Gastrocnemius medialis (tissue), 4 donors: ENCODE measurements at regions of chr2 and their contacts with region 1.

Region 1: DNA sequence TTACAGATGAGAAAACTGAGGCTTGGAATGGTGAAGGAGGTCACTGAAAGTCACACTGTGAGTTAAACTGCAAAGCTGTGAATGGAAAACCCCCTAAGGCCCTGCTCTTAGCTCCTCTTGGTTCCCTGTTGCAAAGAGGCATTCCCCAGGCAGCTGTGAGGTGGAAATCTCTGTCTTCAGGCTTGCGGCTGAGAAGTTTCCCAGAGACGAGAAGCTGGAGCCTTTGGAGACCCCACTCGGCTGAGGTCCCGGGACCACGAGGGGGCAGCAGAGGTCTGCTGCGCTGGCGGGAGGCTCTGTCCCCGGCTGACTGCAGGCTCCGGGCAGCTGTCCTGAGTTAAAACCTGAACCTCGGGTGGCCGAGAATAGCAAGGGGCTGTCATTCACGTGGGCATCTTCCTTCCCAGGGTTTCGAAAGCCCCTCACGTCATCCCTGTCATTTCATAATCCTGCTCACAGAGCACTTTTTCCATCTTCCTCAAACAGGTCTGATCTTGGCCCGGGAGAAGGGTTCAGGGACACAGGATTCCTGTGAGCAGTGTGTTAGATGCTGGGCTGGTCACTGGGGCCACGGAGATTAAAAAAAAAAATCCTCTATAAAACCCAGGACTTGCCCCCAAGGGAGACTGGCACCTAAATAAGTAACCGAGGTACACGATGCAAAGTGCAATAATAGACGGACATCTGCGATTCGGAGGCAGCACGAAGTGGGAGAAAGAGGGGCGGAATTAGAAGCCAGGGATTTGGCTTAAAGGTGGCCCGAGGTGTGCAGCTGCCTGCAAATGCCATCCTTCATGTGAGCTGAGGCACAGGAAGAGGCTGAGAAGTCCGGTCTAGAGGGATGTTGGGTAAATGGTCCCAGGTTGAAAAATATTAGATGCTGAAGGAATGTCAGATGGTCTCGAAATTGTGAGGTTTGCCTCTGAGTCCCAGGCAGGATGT is 24.6 kb upstream of the ATOH8 start:
- DNase-seq: peak; percentile 96 to 98
- ATAC-seq: peak; percentile 63 to 72
- H3K4me3 ChIP-seq: peak overlapping the region in 2 of 4 donors; percentile 6 to 10
- H3K27ac ChIP-seq: peak overlapping the region; percentile 82 to 97 (median 94)
- H3K4me1 ChIP-seq: peaks cover 49 to 54% of the 10 kb centered on the region in 2 donors
- H3K27me3 ChIP-seq: no peaks in the 10 kb centered on the region
- CTCF ChIP-seq: peak; percentile 98 to 99 (median 99)
- POLR2A ChIP-seq: peak; percentile 46 to 68

Region 2: DNA sequence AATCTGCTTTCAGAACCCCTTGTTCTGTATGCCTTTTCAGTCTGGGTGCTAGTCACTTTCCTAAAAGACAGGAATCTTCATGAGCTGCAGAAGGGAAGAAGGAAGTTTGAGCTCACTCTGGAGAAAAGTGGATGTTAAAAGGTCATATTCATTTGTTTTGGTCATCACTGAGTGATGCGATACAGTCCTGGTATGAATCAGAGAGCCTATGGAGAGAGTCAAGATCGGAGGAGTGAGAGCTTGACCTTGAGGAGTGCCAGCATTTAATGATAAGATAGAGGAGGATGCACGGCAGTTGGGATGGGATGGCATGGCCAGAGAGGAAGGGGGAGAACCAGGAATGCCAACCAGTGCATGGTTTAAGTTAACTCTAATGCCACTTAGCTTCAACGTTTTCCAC is 93.5 kb before region 1 on chr2:
- in situ Hi-C with region 1: loop called in 2 of 4 experiments (anchors 5 to 10 kb)
- intact Hi-C with region 1: no loop called
- DNase-seq: no peak
- ATAC-seq: no peak
- H3K4me3 ChIP-seq: no peak overlapping the region
- H3K27ac ChIP-seq: peak overlapping the region in 1 of 4 donors; percentile 1
- H3K4me1 ChIP-seq: no peaks in the 10 kb centered on the region
- H3K27me3 ChIP-seq: no peaks in the 10 kb centered on the region
- CTCF ChIP-seq: no peak
- POLR2A ChIP-seq: no peak

Region 3: GRCh38 chr2:85772019-85772745 is 43.0 kb after region 1 on chr2:
- in situ Hi-C with region 1: no loop called
- intact Hi-C with region 1: loop called (anchors 1 kb)
- DNase-seq: peak; percentile 97 to 99
- ATAC-seq: peak; percentile 72 to 84
- H3K4me3 ChIP-seq: peak overlapping the region; percentile 38 to 55 (median 41)
- H3K27ac ChIP-seq: peak overlapping the region; percentile 84 to 97 (median 92)
- H3K4me1 ChIP-seq: peaks cover 95% of the 10 kb centered on the region in 2 donors
- H3K27me3 ChIP-seq: no peaks in the 10 kb centered on the region
- CTCF ChIP-seq: peak in 2 of 5 experiments; percentile 20 to 44
- POLR2A ChIP-seq: peak; percentile 53 to 60

Region 4: GRCh38 chr2:85813982-85814801 is 85.0 kb after region 1 on chr2:
- in situ Hi-C with region 1: loop called (anchors 5 to 10 kb)
- intact Hi-C with region 1: loop called (anchors 1 kb)
- DNase-seq: peak; percentile 84 to 93
- ATAC-seq: peak; percentile 94 to 98
- H3K4me3 ChIP-seq: no peak overlapping the region
- H3K27ac ChIP-seq: peak overlapping the region in 2 of 4 donors; percentile 1 to 27
- H3K4me1 ChIP-seq: peaks cover 8 to 11% of the 10 kb centered on the region in 2 donors
- H3K27me3 ChIP-seq: no peaks in the 10 kb centered on the region
- CTCF ChIP-seq: peak; percentile 96 to 99 (median 98)
- POLR2A ChIP-seq: no peak

Region 5: DNA sequence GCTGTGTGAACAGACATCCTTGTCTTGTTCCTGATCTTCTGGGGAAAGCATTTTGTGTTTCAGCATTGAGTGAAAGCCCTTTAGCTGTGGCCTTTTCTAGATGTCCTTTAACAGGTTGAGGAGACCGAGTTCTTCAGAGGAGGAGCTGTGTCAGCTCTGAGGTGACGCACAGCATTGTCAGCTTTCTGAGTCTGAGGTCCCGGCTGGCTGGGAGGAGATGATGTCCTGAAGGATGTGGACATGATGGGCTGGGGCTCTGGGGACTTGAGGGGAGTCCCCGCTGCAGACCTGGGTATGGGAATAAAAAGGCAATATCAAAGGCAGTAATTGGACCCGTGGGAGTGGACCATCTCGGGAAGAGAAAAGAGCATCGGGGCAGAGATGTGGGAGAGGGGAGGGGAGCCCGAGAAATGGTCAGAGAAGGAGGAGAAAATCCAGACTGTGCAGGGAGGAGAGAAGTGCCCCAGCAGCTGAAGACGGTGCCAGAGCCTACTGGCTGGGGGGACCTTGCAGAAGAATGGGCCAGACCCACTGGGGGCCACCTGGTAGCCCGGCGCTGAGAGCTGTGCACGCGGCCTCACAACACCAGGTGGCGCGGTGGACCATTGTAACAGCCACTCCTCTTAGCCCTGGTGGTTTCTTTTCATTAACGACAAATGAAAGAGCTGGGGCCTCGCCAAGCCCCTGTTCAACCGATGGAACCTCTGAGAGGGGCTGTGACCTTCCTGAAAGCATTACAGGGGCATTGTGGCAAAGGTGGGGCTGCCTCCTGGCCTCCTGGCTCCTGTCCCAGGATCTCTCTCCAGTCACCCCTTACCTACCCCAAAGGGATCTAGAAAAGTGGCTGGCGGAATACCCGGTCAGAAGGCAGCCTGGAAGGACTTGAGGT is 98.1 kb after region 1 on chr2:
- in situ Hi-C with region 1: no loop called
- intact Hi-C with region 1: no loop called
- DNase-seq: peak; percentile 45 to 61
- ATAC-seq: peak; percentile 81 to 85
- H3K4me3 ChIP-seq: peak overlapping the region in 3 of 4 donors; percentile 17 to 26 (median 23)
- H3K27ac ChIP-seq: no peak overlapping the region
- H3K4me1 ChIP-seq: peaks cover 4 to 7% of the 10 kb centered on the region in 2 donors
- H3K27me3 ChIP-seq: no peaks in the 10 kb centered on the region
- CTCF ChIP-seq: peak; percentile 89 to 95 (median 92)
- POLR2A ChIP-seq: no peak

Region 6: GRCh38 chr2:85954590-85955458 is 225.7 kb after region 1 on chr2:
- in situ Hi-C with region 1: no loop called
- intact Hi-C with region 1: no loop called
- DNase-seq: no peak
- ATAC-seq: no peak
- H3K4me3 ChIP-seq: no peak overlapping the region
- H3K27ac ChIP-seq: no peak overlapping the region
- H3K4me1 ChIP-seq: peaks cover 16 to 20% of the 10 kb centered on the region in 2 donors
- H3K27me3 ChIP-seq: no peaks in the 10 kb centered on the region
- CTCF ChIP-seq: no peak
- POLR2A ChIP-seq: no peak

Region 7: GRCh38 chr2:86017901-86018896 is 289.0 kb after region 1 on chr2:
- in situ Hi-C with region 1: no loop called
- intact Hi-C with region 1: loop called (anchors 5 kb)
- DNase-seq: peak; percentile 87 to 94
- ATAC-seq: peak; percentile 61 to 74
- H3K4me3 ChIP-seq: no peak overlapping the region
- H3K27ac ChIP-seq: peak overlapping the region; percentile 75 to 88 (median 86)
- H3K4me1 ChIP-seq: peaks cover 29 to 41% of the 10 kb centered on the region in 2 donors
- H3K27me3 ChIP-seq: no peaks in the 10 kb centered on the region
- CTCF ChIP-seq: no peak
- POLR2A ChIP-seq: peak in 1 of 2 donors; percentile 42

Region 8: DNA sequence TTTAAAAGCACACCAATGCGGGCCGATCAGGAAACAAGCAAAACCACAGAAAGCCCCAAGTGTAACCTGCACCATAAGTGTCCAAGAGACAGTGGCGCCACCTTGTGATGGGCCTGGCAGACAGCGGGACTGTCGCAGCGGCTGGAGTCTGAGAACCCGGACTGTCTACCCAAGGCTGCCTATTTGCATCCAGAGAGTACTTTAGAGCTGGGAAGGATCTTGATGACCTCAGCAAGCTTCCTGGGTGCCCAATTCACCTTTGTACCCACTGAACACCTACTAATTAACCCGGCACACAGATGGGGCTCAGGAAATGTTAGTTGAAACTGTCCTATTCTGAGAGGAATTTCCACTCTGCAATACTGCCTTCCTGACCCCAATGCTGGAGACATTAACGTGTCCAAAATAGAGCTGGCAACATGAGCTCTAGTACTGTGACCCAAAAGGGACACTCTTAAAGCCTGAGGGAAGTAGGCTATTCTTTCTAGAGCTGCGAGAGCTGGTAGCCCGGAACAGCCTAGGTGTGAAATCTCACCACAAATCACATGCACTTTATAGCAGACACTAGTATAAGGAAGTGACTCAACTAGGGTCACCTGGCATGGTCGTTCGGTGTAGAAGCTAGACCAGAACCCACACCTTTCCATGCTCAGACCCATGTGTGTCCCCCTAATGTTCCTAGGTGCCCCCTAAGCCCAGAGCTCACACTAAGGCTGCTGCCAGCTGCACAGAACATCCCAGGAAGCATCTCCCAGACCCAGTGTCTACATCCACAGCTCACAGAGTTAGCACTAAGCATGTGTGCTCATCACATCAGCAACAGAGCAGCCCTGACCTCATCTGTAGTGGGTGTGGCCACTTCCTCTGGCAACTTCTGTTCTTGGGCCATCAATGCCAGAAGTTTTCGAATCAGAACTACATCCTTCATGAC is 351.1 kb after region 1 on chr2:
- in situ Hi-C with region 1: loop called in 1 of 4 experiments (anchors 5 kb)
- intact Hi-C with region 1: loop called (anchors 5 kb)
- DNase-seq: peak; percentile 69 to 82
- ATAC-seq: peak; percentile 84 to 88
- H3K4me3 ChIP-seq: no peak overlapping the region
- H3K27ac ChIP-seq: peak overlapping the region; percentile 62 to 77 (median 68)
- H3K4me1 ChIP-seq: peaks cover 18 to 19% of the 10 kb centered on the region in 2 donors
- H3K27me3 ChIP-seq: no peaks in the 10 kb centered on the region
- CTCF ChIP-seq: peak; percentile 82 to 88 (median 86)
- POLR2A ChIP-seq: no peak